Mammary epithelial cell (primary cell): ENCODE measurements at regions of chr12 and their contacts with region 1.

Region 1: DNA sequence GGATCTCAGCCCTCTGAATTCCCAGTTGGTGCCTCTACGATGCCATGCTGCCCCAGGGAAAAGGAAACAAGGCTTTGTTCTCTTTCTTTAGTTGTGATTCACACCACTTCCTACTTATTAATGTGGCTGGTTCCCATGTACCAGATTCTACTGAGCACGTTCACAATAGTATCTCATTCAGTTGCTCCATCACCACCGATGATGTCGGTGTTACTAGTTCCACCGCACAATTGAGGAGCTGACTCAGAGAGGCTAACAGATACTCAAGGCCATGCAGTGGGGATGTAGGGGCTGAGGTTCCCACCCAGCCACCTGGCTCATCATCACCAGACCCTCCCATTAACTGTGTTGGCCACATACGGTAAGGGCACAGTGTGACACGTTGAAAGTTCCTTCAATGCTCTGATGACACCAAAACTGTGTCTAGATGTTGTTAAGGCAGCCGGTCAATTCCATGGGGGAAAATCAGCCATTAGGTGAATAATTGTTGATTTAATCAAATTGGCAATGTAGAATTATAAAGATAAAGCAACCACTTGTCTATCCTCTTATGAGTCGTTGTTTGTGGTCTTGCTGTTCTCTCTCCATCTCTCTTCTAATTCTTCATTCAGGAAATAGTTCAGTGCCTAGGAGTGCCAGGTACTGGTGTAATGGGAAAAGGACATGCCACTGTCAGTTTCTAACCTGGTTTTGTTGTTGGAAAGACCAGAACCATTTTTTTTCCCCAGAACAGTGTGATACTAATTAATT is 244.2 kb upstream of the CRY1 start:
- DNase-seq: peak; percentile 97
- H3K4me3 ChIP-seq: no peak overlapping the region
- H3K27ac ChIP-seq: peak overlapping the region; percentile 86
- H3K4me1 ChIP-seq: peaks cover 23% of the 10 kb centered on the region
- H3K27me3 ChIP-seq: no peaks in the 10 kb centered on the region
- CTCF ChIP-seq: no peak

Region 2: DNA sequence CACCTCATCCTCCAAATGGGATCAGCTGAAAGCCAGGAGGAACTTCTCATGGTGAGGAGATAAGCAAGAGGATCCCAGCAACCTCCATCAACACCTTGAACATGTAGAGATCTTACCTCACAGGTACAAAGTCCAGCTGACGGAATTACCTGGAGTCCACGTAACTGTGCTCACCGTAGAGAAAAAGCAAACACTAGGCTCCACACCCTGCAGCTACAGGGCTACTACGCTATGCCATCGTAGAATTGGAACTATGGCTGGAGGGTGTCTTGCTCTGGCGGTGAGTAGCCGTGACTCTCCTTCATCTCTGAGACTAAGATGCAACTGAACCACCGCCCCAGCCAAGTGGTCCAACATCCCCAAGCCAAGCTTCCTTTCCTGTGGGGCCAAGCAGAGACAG is 294.7 kb before region 1 on chr12:
- CTCF ChIA-PET with region 1: no interaction called
- dilution Hi-C with region 1: no loop called
- in situ Hi-C with region 1: no loop called
- intact Hi-C with region 1: no loop called
- DNase-seq: no peak
- H3K4me3 ChIP-seq: no peak overlapping the region
- H3K27ac ChIP-seq: no peak overlapping the region
- H3K4me1 ChIP-seq: no peaks in the 10 kb centered on the region
- H3K27me3 ChIP-seq: no peaks in the 10 kb centered on the region
- CTCF ChIP-seq: no peak

Region 3: GRCh38 chr12:107379852-107380567 is 42.5 kb after region 1 on chr12:
- CTCF ChIA-PET with region 1: no interaction called
- dilution Hi-C with region 1: loop called (anchors 5 kb)
- in situ Hi-C with region 1: no loop called
- intact Hi-C with region 1: no loop called
- DNase-seq: peak; percentile 76
- H3K4me3 ChIP-seq: peak overlapping the region in 1 of 3 experiments; percentile 12
- H3K27ac ChIP-seq: peak overlapping the region; percentile 51
- H3K4me1 ChIP-seq: peaks cover 39% of the 10 kb centered on the region
- H3K27me3 ChIP-seq: no peaks in the 10 kb centered on the region
- CTCF ChIP-seq: no peak

Region 4: DNA sequence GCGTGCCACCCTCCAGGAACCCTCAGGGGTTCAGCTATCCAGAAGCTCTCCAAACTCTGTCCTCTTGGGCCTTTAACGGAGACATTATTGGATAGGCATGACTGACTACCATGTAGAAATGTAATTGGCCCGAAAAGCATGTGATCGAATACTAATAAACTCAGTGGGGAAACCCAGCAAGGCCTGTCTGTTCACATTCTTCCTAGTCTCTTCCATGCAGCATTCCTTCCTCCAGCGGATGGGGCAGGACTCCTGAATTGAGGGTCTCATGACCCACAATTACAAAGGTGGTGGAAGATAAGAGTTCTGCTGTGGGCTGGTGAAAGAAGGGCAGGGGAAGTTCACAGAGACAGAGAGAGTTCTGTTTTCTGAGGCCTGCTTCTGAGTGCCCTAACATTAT is 429.9 kb after region 1 on chr12:
- CTCF ChIA-PET with region 1: no interaction called
- dilution Hi-C with region 1: no loop called
- in situ Hi-C with region 1: no loop called
- intact Hi-C with region 1: no loop called
- DNase-seq: no peak
- H3K4me3 ChIP-seq: no peak overlapping the region
- H3K27ac ChIP-seq: no peak overlapping the region
- H3K4me1 ChIP-seq: no peaks in the 10 kb centered on the region
- H3K27me3 ChIP-seq: no peaks in the 10 kb centered on the region
- CTCF ChIP-seq: no peak